Caco-2 (cell line): ENCODE measurements at regions of chr5 and their contacts with region 1.

Region 1: GRCh38 chr5:38607396-38607795 is 51.0 kb upstream of the LIFR start:
- DNase-seq: peak; percentile 58 to 76
- H3K4me3 ChIP-seq: no peak overlapping the region
- H3K4me3 Mint-ChIP-seq: peak overlapping the region; percentile 61
- H3K27ac Mint-ChIP-seq: peak overlapping the region; percentile 74
- H3K4me1 ChIP-seq: peaks cover 74% of the 10 kb centered on the region
- H3K4me1 Mint-ChIP-seq: peaks cover 43% of the 10 kb centered on the region
- H3K27me3 ChIP-seq: no peaks in the 10 kb centered on the region
- H3K27me3 Mint-ChIP-seq: no peaks in the 10 kb centered on the region
- CTCF ChIP-seq: no peak

Region 2: DNA sequence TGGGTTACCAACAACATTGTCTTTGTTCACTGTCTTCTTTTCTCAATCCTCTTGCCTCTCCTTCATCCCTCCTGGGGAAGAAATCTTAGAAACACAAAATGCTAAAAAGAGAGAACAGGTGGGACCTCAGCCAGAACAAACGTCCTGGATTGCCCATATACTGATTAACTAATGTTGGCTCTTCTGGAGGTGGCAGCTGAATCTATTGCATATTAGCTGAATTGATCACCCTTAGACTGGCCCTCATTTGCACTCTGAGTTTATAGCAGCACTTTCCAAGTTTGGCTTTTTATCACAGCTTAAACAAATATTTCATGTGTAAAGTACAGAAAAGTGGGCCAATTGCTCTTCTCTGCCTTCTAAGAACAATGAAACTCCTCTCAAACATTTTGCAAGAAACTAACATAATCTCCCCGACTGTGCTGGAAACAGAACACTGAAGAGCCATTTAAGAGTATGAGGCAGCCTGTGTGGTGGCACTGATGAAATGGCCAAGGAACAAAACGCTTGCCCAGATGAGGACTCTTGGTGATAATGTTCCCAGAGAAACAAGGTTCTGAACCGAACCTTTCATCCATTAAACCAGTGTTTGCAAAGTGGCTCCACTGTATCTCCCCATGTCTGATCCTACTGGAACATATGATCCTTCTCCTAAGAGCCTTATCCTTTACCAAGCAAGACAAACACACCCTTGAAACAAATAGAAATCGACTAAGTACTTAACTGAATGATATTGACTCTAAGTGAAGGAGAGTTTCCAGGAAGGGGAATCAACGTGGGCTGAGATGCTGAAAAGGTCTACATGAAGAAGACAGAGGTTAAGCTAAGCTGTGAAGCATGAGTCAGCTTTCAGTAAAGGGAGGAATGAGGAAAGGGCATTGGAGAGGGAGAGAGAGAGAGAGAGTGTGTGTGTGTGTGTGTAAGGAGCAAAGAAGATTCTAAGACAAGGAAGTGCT is 32.3 kb after region 1 on chr5:
- CTCF ChIA-PET with region 1: no interaction called
- POLR2A ChIA-PET with region 1: no interaction called
- intact Hi-C with region 1: loop called (anchors 1 kb)
- DNase-seq: peak in 1 of 2 experiments; percentile 24
- H3K4me3 ChIP-seq: no peak overlapping the region
- H3K4me3 Mint-ChIP-seq: peak overlapping the region; percentile 1
- H3K27ac Mint-ChIP-seq: peak overlapping the region; percentile 67
- H3K4me1 ChIP-seq: peaks cover 70% of the 10 kb centered on the region
- H3K4me1 Mint-ChIP-seq: peaks cover 46% of the 10 kb centered on the region
- H3K27me3 ChIP-seq: no peaks in the 10 kb centered on the region
- H3K27me3 Mint-ChIP-seq: no peaks in the 10 kb centered on the region
- CTCF ChIP-seq: no peak

Region 3: GRCh38 chr5:38650946-38651345 is 43.5 kb after region 1 on chr5:
- CTCF ChIA-PET with region 1: no interaction called
- POLR2A ChIA-PET with region 1: no interaction called
- intact Hi-C with region 1: no loop called
- DNase-seq: no peak
- H3K4me3 ChIP-seq: no peak overlapping the region
- H3K4me3 Mint-ChIP-seq: peak overlapping the region; percentile 34
- H3K27ac Mint-ChIP-seq: peak overlapping the region; percentile 66
- H3K4me1 ChIP-seq: peaks cover 9% of the 10 kb centered on the region
- H3K4me1 Mint-ChIP-seq: peaks cover 19% of the 10 kb centered on the region
- H3K27me3 ChIP-seq: no peaks in the 10 kb centered on the region
- H3K27me3 Mint-ChIP-seq: no peaks in the 10 kb centered on the region
- CTCF ChIP-seq: no peak